ENCODE measurements at regions of chr11 and their contacts with region 1.

Region 1: GRCh38 chr11:20127671-20128527 is 32.4 kb downstream of the DBX1 start:
- DNase-seq: peak; percentile 86
- H3K4me3 Mint-ChIP-seq: no peak overlapping the region
- H3K27ac Mint-ChIP-seq: no peak overlapping the region
- H3K4me1 Mint-ChIP-seq: peaks cover 9% of the 10 kb centered on the region
- H3K27me3 Mint-ChIP-seq: peaks cover 2% of the 10 kb centered on the region
- CTCF ChIP-seq: peak; percentile 87

Region 2: GRCh38 chr11:19240420-19241259 is 887.3 kb before region 1 on chr11 and contains the start of gene E2F8:
- CTCF ChIA-PET with region 1: no interaction called
- intact Hi-C with region 1: loop called (anchors 10 kb)
- DNase-seq: peak; percentile 98
- H3K4me3 Mint-ChIP-seq: peak within 1 kb of the TSS; percentile 70
- H3K27ac Mint-ChIP-seq: peak within 1 kb of the TSS; percentile 75
- H3K4me1 Mint-ChIP-seq: peaks cover 50% of the 10 kb centered on the region
- H3K27me3 Mint-ChIP-seq: no peaks in the 10 kb centered on the region
- CTCF ChIP-seq: no peak
- total RNA-seq, gene E2F8: 14.9 and 19.7 TPM in 2 replicates

Region 3: GRCh38 chr11:19742588-19743292 is 385.2 kb before region 1 on chr11:
- CTCF ChIA-PET with region 1: no interaction called
- intact Hi-C with region 1: loop called (anchors 10 kb)
- DNase-seq: peak; percentile 81
- H3K4me3 Mint-ChIP-seq: no peak overlapping the region
- H3K27ac Mint-ChIP-seq: no peak overlapping the region
- H3K4me1 Mint-ChIP-seq: peaks cover 31% of the 10 kb centered on the region
- H3K27me3 Mint-ChIP-seq: no peaks in the 10 kb centered on the region
- CTCF ChIP-seq: peak; percentile 92

Region 4: GRCh38 chr11:19808076-19808911 is 319.6 kb before region 1 on chr11:
- CTCF ChIA-PET with region 1: no interaction called
- intact Hi-C with region 1: no loop called
- DNase-seq: no peak
- H3K4me3 Mint-ChIP-seq: no peak overlapping the region
- H3K27ac Mint-ChIP-seq: no peak overlapping the region
- H3K4me1 Mint-ChIP-seq: peaks cover 54% of the 10 kb centered on the region
- H3K27me3 Mint-ChIP-seq: no peaks in the 10 kb centered on the region
- CTCF ChIP-seq: no peak

Region 5: DNA sequence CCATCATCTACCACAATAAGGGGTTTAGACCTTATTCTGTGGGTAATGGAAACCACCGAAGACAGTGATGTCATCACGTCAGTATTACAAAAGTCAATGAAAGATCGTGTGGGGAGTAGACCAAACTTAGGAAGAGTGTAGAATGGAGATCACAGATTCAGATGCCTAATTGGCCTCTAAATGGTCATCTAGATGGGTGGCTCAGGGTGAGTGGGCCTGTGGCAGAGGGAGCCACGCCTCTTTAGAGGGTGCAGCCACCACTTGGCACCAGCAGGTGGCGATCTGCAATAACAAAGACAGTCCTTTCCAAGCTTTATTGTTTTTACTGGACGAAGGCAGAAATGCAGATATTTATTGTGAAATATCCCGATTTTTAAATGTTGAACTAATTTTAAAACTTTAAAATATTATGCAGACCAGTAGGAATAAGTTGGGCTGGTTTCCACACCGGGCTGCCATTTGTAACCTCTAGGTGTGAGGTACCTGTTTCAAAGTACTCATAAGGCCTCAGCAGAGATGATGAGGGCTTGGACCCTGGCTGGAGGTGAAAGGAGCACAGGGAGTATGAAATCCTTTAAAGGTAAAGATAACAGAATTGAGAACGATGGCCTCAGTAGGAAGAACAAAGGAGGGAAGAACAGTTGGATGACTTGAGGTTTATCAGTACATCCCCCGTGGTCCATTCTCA is 189.6 kb before region 1 on chr11:
- CTCF ChIA-PET with region 1: interaction called, 13 read pairs
- intact Hi-C with region 1: loop called (anchors 2 kb)
- DNase-seq: peak; percentile 74
- H3K4me3 Mint-ChIP-seq: no peak overlapping the region
- H3K27ac Mint-ChIP-seq: peak overlapping the region; percentile 16
- H3K4me1 Mint-ChIP-seq: peaks cover 29% of the 10 kb centered on the region
- H3K27me3 Mint-ChIP-seq: no peaks in the 10 kb centered on the region
- CTCF ChIP-seq: peak; percentile 78

Region 6: DNA sequence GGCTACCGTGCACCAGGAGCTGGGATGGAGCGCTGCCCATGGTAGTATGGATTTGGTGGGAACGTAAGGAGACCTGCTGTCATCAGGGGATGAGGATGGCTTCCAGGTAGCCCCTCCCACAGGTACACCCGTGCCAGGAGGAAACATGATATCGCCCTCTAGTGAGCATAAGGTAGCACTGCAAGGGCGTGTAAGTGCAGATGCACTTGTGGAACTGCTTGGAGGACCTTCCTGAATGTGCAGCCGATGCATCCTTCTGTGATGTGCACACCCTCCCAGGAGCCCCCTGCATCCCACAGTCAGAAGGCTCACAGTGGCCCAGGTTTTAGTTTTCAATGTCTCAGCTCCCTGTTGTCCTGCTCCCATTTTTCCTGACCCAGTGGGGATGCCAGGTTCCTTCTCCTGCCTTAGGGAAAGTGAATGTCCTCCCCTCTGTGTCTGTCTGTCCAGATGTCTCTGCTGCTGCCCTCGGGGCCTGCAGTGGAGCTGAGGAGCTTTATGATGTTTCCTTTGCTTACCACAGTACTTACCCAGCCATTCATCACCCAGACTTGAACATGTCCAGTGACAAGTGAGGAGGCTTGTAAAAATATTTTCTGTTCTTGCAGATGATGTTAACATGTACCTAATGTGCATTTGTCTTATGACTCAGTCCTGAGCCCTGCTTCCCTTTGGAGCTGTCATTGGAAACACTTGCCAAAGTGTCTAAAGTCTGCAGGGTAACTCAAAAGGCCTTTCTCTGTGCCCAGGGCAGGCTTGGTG is 16.8 kb before region 1 on chr11:
- CTCF ChIA-PET with region 1: interaction called, 10 read pairs
- intact Hi-C with region 1: no loop called
- DNase-seq: peak; percentile 78
- H3K4me3 Mint-ChIP-seq: no peak overlapping the region
- H3K27ac Mint-ChIP-seq: peak overlapping the region; percentile 81
- H3K4me1 Mint-ChIP-seq: peaks cover 29% of the 10 kb centered on the region
- H3K27me3 Mint-ChIP-seq: no peaks in the 10 kb centered on the region
- CTCF ChIP-seq: peak; percentile 77

Region 7: DNA sequence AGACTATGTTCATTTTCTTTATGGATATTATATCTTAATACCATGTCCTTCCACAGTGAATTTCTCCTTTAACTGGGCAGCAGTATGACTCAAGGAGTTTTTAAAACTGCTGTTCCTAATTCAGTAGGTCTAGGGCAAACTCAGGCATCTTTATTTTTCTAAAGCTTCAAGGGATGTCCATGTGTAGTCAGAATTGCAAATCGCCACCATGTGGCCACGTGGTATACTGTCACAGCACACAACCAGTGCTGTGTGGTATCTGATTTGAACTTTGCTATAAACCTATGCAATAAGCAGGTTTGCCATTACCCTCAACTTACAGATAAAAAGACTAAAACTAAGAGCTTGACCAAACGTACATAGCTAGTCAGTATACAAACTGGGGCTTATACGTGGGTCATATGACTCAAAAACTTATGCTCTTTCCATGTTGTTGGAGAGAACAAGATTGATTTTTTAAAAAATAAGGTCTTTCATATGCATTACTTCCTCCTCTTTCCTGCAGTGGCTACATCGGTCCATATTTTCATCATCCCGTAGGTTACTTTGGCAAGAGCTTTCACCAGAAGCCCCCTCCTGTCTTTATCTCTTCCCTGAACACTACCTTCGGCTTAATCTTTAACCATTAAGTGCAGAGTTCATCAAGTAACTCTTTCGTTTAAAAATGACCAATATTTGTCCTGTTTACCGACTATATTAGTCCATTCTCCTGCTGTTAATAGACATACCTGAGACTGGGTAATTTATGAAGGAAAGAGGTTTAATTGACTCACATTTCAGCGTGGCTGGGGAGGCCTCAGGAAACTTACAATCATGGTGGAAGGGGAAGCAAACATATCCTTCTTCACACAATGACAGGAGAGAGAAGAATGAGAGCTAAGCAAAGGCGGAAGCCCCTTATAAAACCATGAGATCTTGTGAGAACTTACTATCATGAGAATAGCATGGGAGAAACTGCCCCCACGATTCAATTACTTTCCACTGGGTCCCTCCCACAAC is 227.6 kb after region 1 on chr11:
- CTCF ChIA-PET with region 1: interaction called, 30 read pairs
- intact Hi-C with region 1: loop called (anchors 1 kb)
- DNase-seq: peak; percentile 57
- H3K4me3 Mint-ChIP-seq: no peak overlapping the region
- H3K27ac Mint-ChIP-seq: no peak overlapping the region
- H3K4me1 Mint-ChIP-seq: peaks cover 37% of the 10 kb centered on the region
- H3K27me3 Mint-ChIP-seq: no peaks in the 10 kb centered on the region
- CTCF ChIP-seq: peak; percentile 52